ENCODE measurements at regions of chr14 and their contacts with region 1.

Region 1: GRCh38 chr14:61395115-61395725 is 73.8 kb downstream of the PRKCH start:
- DNase-seq: peak in 4 of 9 experiments; percentile 23 to 57 (median 38)
- ATAC-seq: peak; percentile 20
- H3K4me3 ChIP-seq: no peak overlapping the region
- H3K4me3 Mint-ChIP-seq: peak overlapping the region; percentile 59
- H3K27ac ChIP-seq: peak overlapping the region in 1 of 2 experiments; percentile 49
- H3K27ac Mint-ChIP-seq: peak overlapping the region; percentile 90
- H3K4me1 ChIP-seq: peaks cover 98% of the 10 kb centered on the region
- H3K4me1 Mint-ChIP-seq: no peaks in the 10 kb centered on the region
- H3K27me3 ChIP-seq: no peaks in the 10 kb centered on the region
- H3K27me3 Mint-ChIP-seq: no peaks in the 10 kb centered on the region
- CTCF ChIP-seq: no peak

Region 2: GRCh38 chr14:61438860-61439684 is 43.9 kb after region 1 on chr14:
- CTCF ChIA-PET with region 1: interaction called, 3 read pairs
- POLR2A ChIA-PET with region 1: interaction called, 3 read pairs
- intact Hi-C with region 1: loop called in 1 of 2 experiments (anchors 2 kb)
- DNase-seq: peak in 6 of 9 experiments; percentile 43 to 82 (median 59)
- ATAC-seq: peak; percentile 39
- H3K4me3 ChIP-seq: peak overlapping the region; percentile 19 to 34
- H3K4me3 Mint-ChIP-seq: peak overlapping the region; percentile 74
- H3K27ac ChIP-seq: peak overlapping the region; percentile 31 to 79
- H3K27ac Mint-ChIP-seq: peak overlapping the region; percentile 91
- H3K4me1 ChIP-seq: peaks cover 93% of the 10 kb centered on the region
- H3K4me1 Mint-ChIP-seq: peaks cover 91% of the 10 kb centered on the region
- H3K27me3 ChIP-seq: no peaks in the 10 kb centered on the region
- H3K27me3 Mint-ChIP-seq: no peaks in the 10 kb centered on the region
- CTCF ChIP-seq: no peak